ENCODE measurements at regions of chr22 and their contacts with region 1.

Region 1: DNA sequence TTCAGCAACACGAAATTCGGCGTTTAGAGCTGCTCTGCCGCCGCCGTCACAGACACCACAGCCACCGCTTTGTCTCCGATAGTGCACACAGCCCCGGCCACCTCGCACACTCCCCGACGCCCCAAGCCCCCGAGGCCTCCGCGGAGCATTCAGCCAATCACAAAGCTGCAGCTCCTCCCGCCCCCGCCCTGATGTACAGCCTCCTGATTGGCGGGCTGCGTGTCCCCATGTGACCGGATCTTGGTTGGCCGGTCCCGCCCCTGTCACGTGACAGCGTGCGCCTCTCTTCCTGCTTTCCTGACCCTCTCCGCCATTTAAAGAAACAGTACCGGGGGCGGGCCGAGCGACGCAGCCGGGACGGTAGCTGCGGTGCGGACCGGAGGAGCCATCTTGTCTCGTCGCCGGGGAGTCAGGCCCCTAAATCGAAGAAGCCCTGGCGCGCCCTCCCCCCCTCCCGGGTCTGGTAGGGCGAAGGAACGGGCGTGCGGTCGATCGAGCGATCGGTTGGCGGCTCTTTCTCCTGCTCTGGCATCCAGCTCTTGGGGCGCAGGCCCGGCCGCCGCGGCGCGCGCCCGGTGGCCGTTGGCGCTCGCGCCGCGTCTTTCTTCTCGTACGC is at the start of gene TUG1:
- DNase-seq: peak; percentile 95 to 99 (median 97)
- ATAC-seq: peak; percentile 93
- H3K4me3 ChIP-seq: peak within 1 kb of the TSS; percentile 80
- H3K4me3 Mint-ChIP-seq: peak within 1 kb of the TSS; percentile 97
- H3K27ac ChIP-seq: peak within 1 kb of the TSS; percentile 80 to 91
- H3K27ac Mint-ChIP-seq: peak within 1 kb of the TSS; percentile 98
- H3K4me1 ChIP-seq: peaks cover 23% of the 10 kb centered on the region
- H3K4me1 Mint-ChIP-seq: peaks cover 63% of the 10 kb centered on the region
- H3K27me3 ChIP-seq: no peaks in the 10 kb centered on the region
- H3K27me3 Mint-ChIP-seq: no peaks in the 10 kb centered on the region
- CTCF ChIP-seq: no peak
- total RNA-seq, gene TUG1: 85.8 to 86.2 TPM

Region 2: DNA sequence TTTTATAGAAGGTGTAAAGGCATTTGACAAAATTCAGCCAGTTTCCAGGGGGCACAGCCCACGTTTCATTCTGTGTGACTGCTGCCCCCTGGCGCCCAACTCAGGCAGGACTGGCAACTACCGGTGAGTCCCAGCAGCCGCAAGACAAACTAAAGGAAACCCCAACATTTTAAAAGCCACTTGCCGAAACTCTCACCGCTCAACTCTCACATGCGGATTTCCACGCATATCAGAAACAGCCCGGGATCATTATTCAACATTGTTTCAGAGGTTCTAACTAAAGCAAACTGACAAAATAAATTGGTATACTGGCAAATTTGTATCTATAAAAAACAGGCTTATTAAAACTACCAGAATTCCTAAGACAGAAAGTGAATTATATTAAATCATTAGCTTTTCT is 48.6 kb before region 1 on chr22:
- CTCF ChIA-PET with region 1: interaction called, 5 read pairs
- POLR2A ChIA-PET with region 1: interaction called, 26 read pairs
- intact Hi-C with region 1: loop called in 1 of 2 experiments (anchors 2 kb)
- DNase-seq: peak; percentile 74 to 91 (median 82)
- ATAC-seq: peak; percentile 80
- H3K4me3 ChIP-seq: peak overlapping the region; percentile 1
- H3K4me3 Mint-ChIP-seq: peak overlapping the region; percentile 60
- H3K27ac ChIP-seq: no peak overlapping the region
- H3K27ac Mint-ChIP-seq: peak overlapping the region; percentile 25
- H3K4me1 ChIP-seq: peaks cover 23% of the 10 kb centered on the region
- H3K4me1 Mint-ChIP-seq: peaks cover 22% of the 10 kb centered on the region
- H3K27me3 ChIP-seq: no peaks in the 10 kb centered on the region
- H3K27me3 Mint-ChIP-seq: no peaks in the 10 kb centered on the region
- CTCF ChIP-seq: peak; percentile 99

Region 3: GRCh38 chr22:30955153-30955552 is 13.9 kb before region 1 on chr22:
- CTCF ChIA-PET with region 1: no interaction called
- POLR2A ChIA-PET with region 1: interaction called, 35 read pairs
- intact Hi-C with region 1: no loop called
- DNase-seq: peak in 1 of 14 experiments; percentile 9
- ATAC-seq: no peak
- H3K4me3 ChIP-seq: no peak overlapping the region
- H3K4me3 Mint-ChIP-seq: peak overlapping the region; percentile 54
- H3K27ac ChIP-seq: no peak overlapping the region
- H3K27ac Mint-ChIP-seq: peak overlapping the region; percentile 74
- H3K4me1 ChIP-seq: peaks cover 29% of the 10 kb centered on the region
- H3K4me1 Mint-ChIP-seq: peaks cover 83% of the 10 kb centered on the region
- H3K27me3 ChIP-seq: no peaks in the 10 kb centered on the region
- H3K27me3 Mint-ChIP-seq: no peaks in the 10 kb centered on the region
- CTCF ChIP-seq: no peak

Region 4: DNA sequence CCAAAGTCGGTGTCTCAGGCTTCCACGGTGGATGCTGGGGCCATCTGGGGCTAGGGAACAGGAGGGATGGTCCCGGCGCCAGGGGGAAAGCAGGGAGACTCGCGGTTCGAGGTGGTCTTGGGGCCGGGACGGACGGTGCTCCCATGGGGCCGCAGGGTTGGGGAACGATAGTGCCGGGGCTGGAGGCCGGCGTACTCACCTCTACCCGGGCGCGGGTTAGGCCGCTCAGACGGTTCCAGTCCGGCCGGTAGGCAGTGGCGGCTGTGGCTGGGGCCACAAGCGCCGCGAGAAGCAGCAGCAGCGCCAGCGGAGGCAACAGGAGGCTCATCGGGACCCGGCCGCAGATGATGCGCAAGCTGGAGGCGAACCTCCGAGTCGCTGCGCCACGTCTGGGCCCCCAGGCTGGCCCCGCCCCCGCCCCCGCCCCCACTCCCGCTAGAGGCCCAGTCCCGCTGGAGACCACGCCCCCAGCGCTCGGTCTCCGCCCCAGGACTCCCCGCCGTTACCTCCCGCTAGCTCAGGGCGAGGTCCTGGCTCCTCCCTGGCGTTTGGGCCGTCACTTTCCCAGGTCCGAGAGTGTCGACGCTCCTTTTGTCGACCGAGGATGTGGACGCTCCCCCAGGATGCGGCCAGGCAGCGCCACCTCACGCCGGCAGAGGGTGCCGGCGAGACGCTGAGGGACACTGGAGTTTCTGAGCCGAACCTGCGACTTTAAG is 138.3 kb after region 1 on chr22 and contains the start of gene SELENOM:
- CTCF ChIA-PET with region 1: no interaction called
- POLR2A ChIA-PET with region 1: interaction called, 12 read pairs
- intact Hi-C with region 1: no loop called
- DNase-seq: peak; percentile 71 to 95 (median 82)
- ATAC-seq: peak; percentile 90
- H3K4me3 ChIP-seq: peak within 1 kb of the TSS; percentile 75
- H3K4me3 Mint-ChIP-seq: peak within 1 kb of the TSS; percentile 97
- H3K27ac ChIP-seq: peak within 1 kb of the TSS; percentile 24 to 51
- H3K27ac Mint-ChIP-seq: peak within 1 kb of the TSS; percentile 87
- H3K4me1 ChIP-seq: peaks cover 31% of the 10 kb centered on the region
- H3K4me1 Mint-ChIP-seq: peaks cover 24% of the 10 kb centered on the region
- H3K27me3 ChIP-seq: no peaks in the 10 kb centered on the region
- H3K27me3 Mint-ChIP-seq: no peaks in the 10 kb centered on the region
- CTCF ChIP-seq: peak; percentile 70
- total RNA-seq, gene SELENOM: 78.0 to 82.4 TPM

Region 5: GRCh38 chr22:31290494-31291471 is 321.8 kb after region 1 on chr22:
- CTCF ChIA-PET with region 1: no interaction called
- POLR2A ChIA-PET with region 1: interaction called, 14 read pairs
- intact Hi-C with region 1: no loop called
- DNase-seq: peak; percentile 93 to 98 (median 96)
- ATAC-seq: peak; percentile 66
- H3K4me3 ChIP-seq: peak overlapping the region; percentile 90
- H3K4me3 Mint-ChIP-seq: peak overlapping the region; percentile 94
- H3K27ac ChIP-seq: peak overlapping the region; percentile 98 to 100
- H3K27ac Mint-ChIP-seq: peak overlapping the region; percentile 98
- H3K4me1 ChIP-seq: peaks cover 69% of the 10 kb centered on the region
- H3K4me1 Mint-ChIP-seq: peaks cover 82% of the 10 kb centered on the region
- H3K27me3 ChIP-seq: no peaks in the 10 kb centered on the region
- H3K27me3 Mint-ChIP-seq: no peaks in the 10 kb centered on the region
- CTCF ChIP-seq: no peak

Region 6: GRCh38 chr22:32474635-32475467 is 1505.8 kb after region 1 on chr22 and contains the start of gene FBXO7:
- CTCF ChIA-PET with region 1: no interaction called
- POLR2A ChIA-PET with region 1: no interaction called
- intact Hi-C with region 1: loop called in 1 of 2 experiments (anchors 10 kb)
- DNase-seq: peak; percentile 68 to 94 (median 82)
- ATAC-seq: peak; percentile 82
- H3K4me3 ChIP-seq: peak within 1 kb of the TSS; percentile 91
- H3K4me3 Mint-ChIP-seq: peak within 1 kb of the TSS; percentile 95
- H3K27ac ChIP-seq: peak within 1 kb of the TSS; percentile 84 to 95
- H3K27ac Mint-ChIP-seq: no peak within 1 kb of the TSS
- H3K4me1 ChIP-seq: peaks cover 20% of the 10 kb centered on the region
- H3K4me1 Mint-ChIP-seq: peaks cover 26% of the 10 kb centered on the region
- H3K27me3 ChIP-seq: no peaks in the 10 kb centered on the region
- H3K27me3 Mint-ChIP-seq: no peaks in the 10 kb centered on the region
- CTCF ChIP-seq: peak; percentile 23
- total RNA-seq, gene FBXO7: 161 to 169 TPM